Sigmoid colon (tissue), 7 donors: ENCODE measurements at regions of chr1 and their contacts with region 1.

Region 1: DNA sequence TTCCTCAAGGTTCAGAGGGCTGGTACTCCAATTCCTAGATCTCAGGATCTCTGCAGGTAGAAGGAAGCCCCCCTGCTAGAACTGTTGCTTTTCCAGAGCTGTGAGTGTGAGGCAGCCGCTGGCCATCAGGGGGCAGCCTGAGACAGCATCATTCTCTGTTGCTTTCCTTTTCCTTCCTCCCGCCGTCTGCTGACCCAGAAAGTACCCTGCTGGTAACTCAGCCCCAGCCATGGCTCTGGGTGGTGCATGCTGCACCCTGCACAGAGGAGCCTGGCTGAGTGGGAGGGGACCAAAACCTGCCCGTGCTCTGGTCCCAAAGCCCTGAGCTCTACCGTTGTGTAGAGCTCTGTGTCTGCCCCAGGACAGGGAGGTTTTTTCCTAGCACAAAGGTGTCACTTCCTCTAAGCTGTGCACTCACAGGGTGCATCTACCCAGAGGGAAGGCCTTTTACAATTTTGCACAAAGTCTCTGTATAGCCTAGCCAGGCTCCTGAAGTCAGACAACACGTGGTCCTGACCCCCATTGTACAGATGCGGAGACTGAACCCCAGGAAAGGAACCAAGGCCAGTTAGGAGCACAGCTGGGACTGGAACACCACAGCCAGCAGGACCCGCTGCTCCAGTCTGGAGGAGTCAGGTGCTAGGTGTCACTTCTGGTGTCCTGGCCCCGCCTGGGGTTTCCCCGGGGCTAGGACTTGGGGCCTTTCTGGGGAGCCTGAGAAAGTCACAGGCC is 5.6 kb upstream of the FAM131C start:
- DNase-seq: peak; percentile 89
- H3K4me3 ChIP-seq: no peak overlapping the region
- H3K27ac ChIP-seq: no peak overlapping the region
- H3K4me1 ChIP-seq: peaks cover 0 to 27% (median 18%) of the 10 kb centered on the region in 4 donors
- H3K27me3 ChIP-seq: peaks cover 0 to 3% (median 0%) of the 10 kb centered on the region in 3 donors
- CTCF ChIP-seq: peak; percentile 81 to 97 (median 96)
- EP300 ChIP-seq: no peak
- POLR2A ChIP-seq: no peak

Region 2: GRCh38 chr1:16155532-16156410 is 76.7 kb after region 1 on chr1 and contains the start of gene EPHA2:
- intact Hi-C with region 1: loop called (anchors 2 kb)
- DNase-seq: peak; percentile 93
- H3K4me3 ChIP-seq: peak within 1 kb of the TSS; percentile 56 to 80 (median 56)
- H3K27ac ChIP-seq: peak within 1 kb of the TSS; percentile 76 to 89 (median 81)
- H3K4me1 ChIP-seq: peaks cover 0 to 38% (median 27%) of the 10 kb centered on the region in 4 donors
- H3K27me3 ChIP-seq: no peaks in the 10 kb centered on the region
- CTCF ChIP-seq: no peak
- EP300 ChIP-seq: no peak
- POLR2A ChIP-seq: peak; percentile 73 to 85
- total RNA-seq, gene EPHA2: 3.3 to 6.4 (median 4.9) TPM

Region 3: GRCh38 chr1:16187748-16188401 is 108.8 kb after region 1 on chr1:
- intact Hi-C with region 1: loop called (anchors 1 kb)
- DNase-seq: peak; percentile 86
- H3K4me3 ChIP-seq: no peak overlapping the region
- H3K27ac ChIP-seq: peak overlapping the region in 1 of 4 donors; percentile 21
- H3K4me1 ChIP-seq: peaks cover 0 to 14% (median 6%) of the 10 kb centered on the region in 4 donors
- H3K27me3 ChIP-seq: no peaks in the 10 kb centered on the region
- CTCF ChIP-seq: peak; percentile 92 to 99 (median 97)
- EP300 ChIP-seq: no peak
- POLR2A ChIP-seq: no peak

Region 4: GRCh38 chr1:16243936-16244649 is 165.0 kb after region 1 on chr1:
- intact Hi-C with region 1: loop called (anchors 2 kb)
- DNase-seq: peak; percentile 90
- H3K4me3 ChIP-seq: no peak overlapping the region
- H3K27ac ChIP-seq: peak overlapping the region in 3 of 4 donors; percentile 19 to 37 (median 19)
- H3K4me1 ChIP-seq: peaks cover 0 to 32% (median 23%) of the 10 kb centered on the region in 4 donors
- H3K27me3 ChIP-seq: no peaks in the 10 kb centered on the region
- CTCF ChIP-seq: peak; percentile 64 to 84 (median 82)
- EP300 ChIP-seq: no peak
- POLR2A ChIP-seq: no peak

Region 5: GRCh38 chr1:16366722-16367257 is 287.7 kb after region 1 on chr1 and contains the start of gene SZRD1:
- intact Hi-C with region 1: loop called (anchors 5 kb)
- DNase-seq: peak; percentile 99
- H3K4me3 ChIP-seq: peak within 1 kb of the TSS; percentile 64 to 92 (median 85)
- H3K27ac ChIP-seq: peak within 1 kb of the TSS; percentile 92 to 98 (median 94)
- H3K4me1 ChIP-seq: peaks cover 0 to 46% (median 39%) of the 10 kb centered on the region in 4 donors
- H3K27me3 ChIP-seq: no peaks in the 10 kb centered on the region
- CTCF ChIP-seq: no peak
- EP300 ChIP-seq: no peak
- POLR2A ChIP-seq: no peak
- total RNA-seq, gene SZRD1: 65.0 to 77.3 (median 68.1) TPM